Activated T-helper 1 cell treated with anti-CD3 and anti-CD28 coated beads, Interleukin-12 subunit alpha, Interleukin-12 subunit beta, Interleukin-2, Interleukin-4 antibody, amounts not matched to agents 30 ng/mL and 10 ng/mL and 1 ng/mL, durations not matched to agents 14 hours and 24 hours and 36 hours (primary cell): ENCODE measurements at regions of chr1 and their contacts with region 1.

Region 1: GRCh38 chr1:207097871-207098324 is 6.1 kb upstream of the C4BPA start:
- DNase-seq: peak; percentile 50
- H3K4me3 Mint-ChIP-seq: peak overlapping the region; percentile 27
- H3K27ac Mint-ChIP-seq: peak overlapping the region; percentile 69
- H3K4me1 Mint-ChIP-seq: peaks cover 40% of the 10 kb centered on the region
- H3K27me3 Mint-ChIP-seq: no peaks in the 10 kb centered on the region

Region 2: DNA sequence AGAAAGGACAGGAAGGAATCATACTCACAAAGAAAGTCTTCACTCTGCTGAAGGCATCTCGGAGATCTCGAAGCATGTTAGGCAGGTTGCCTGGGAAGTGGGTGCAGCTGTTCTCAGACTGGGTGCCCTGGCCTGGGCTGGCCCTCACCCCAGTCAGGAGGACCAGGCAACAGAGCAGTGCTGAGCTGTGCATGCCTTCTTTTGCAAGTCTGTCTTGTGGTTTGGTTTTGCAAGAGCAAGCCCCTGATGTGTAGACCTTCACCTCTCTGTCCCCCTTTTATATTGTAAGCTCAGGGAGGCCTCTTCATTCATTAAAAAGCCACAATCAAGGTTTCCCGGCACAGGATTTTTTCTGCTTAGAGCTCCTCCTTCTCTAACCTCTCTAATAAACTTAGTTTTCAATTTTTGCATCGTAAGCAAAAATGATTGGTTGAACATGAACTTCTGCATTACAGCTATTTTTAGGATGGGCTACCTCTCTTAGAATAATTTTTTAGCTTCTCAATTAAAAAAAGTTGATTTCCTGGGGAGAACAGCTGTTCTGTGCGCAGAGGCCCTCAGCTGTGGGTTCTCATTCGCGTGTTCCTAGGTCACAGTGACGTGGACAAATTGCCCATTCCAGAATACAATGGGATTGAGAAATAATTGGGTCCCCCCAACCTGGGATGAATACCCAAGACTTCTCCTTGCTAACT is 325.5 kb before region 1 on chr1 and contains the start of gene IL10:
- intact Hi-C with region 1: no loop called
- DNase-seq: no peak
- H3K4me3 Mint-ChIP-seq: no peak within 1 kb of the TSS
- H3K27ac Mint-ChIP-seq: no peak within 1 kb of the TSS
- H3K4me1 Mint-ChIP-seq: peaks cover 58% of the 10 kb centered on the region
- H3K27me3 Mint-ChIP-seq: peaks cover 45% of the 10 kb centered on the region
- total RNA-seq, gene IL10: 4.4 and 5.0 TPM in 2 replicates

Region 3: GRCh38 chr1:207084701-207085180 is 13.2 kb before region 1 on chr1:
- intact Hi-C with region 1: loop called (anchors 1 kb)
- DNase-seq: peak; percentile 50
- H3K4me3 Mint-ChIP-seq: no peak overlapping the region
- H3K27ac Mint-ChIP-seq: peak overlapping the region; percentile 5
- H3K4me1 Mint-ChIP-seq: peaks cover 39% of the 10 kb centered on the region
- H3K27me3 Mint-ChIP-seq: peaks cover 12% of the 10 kb centered on the region

Region 4: GRCh38 chr1:207140536-207140935 is 42.6 kb after region 1 on chr1:
- intact Hi-C with region 1: no loop called
- DNase-seq: no peak
- H3K4me3 Mint-ChIP-seq: no peak overlapping the region
- H3K27ac Mint-ChIP-seq: no peak overlapping the region
- H3K4me1 Mint-ChIP-seq: no peaks in the 10 kb centered on the region
- H3K27me3 Mint-ChIP-seq: no peaks in the 10 kb centered on the region

Region 5: GRCh38 chr1:207186503-207186902 is 88.6 kb after region 1 on chr1:
- intact Hi-C with region 1: no loop called
- DNase-seq: no peak
- H3K4me3 Mint-ChIP-seq: no peak overlapping the region
- H3K27ac Mint-ChIP-seq: no peak overlapping the region
- H3K4me1 Mint-ChIP-seq: no peaks in the 10 kb centered on the region
- H3K27me3 Mint-ChIP-seq: peaks cover 12% of the 10 kb centered on the region

Region 6: DNA sequence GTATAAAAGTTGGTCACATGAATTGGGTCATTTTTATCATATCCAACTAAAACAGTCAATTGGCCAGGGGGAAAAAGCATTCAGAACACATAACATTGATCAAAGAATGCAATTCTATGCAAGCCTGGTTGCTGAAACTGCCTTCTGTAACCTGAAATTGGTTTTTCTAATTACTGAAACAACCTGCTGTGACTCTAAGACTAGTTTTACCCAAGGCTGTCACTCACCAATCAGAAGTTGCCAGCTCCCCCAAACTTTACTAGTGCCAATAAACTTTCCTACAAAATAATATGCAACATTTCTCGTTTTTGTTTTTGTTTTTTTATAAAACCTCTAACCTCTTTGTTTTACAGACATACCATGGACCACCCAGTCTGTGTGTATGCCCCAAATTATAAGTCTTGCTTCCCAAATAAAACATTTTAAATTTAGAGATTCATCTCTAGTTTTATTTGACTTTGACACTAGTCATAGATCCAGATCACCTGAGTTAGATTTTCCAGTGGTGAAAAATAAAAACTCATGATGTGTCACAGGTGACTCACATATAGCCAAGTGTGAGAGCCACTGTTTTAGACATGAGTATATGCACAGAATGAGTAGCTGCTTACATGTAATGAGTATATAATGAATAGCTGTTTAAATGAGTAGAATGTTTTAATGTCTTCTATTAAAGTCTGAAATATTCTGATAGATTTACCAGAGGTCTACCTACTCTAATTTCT is 292.0 kb after region 1 on chr1:
- intact Hi-C with region 1: loop called (anchors 1 kb)
- DNase-seq: no peak
- H3K4me3 Mint-ChIP-seq: no peak overlapping the region
- H3K27ac Mint-ChIP-seq: peak overlapping the region; percentile 81
- H3K4me1 Mint-ChIP-seq: peaks cover 7% of the 10 kb centered on the region
- H3K27me3 Mint-ChIP-seq: no peaks in the 10 kb centered on the region

Region 7: GRCh38 chr1:207414606-207415108 is 316.8 kb after region 1 on chr1:
- intact Hi-C with region 1: loop called (anchors 1 kb)
- DNase-seq: no peak
- H3K4me3 Mint-ChIP-seq: no peak overlapping the region
- H3K27ac Mint-ChIP-seq: peak overlapping the region; percentile 35
- H3K4me1 Mint-ChIP-seq: peaks cover 33% of the 10 kb centered on the region
- H3K27me3 Mint-ChIP-seq: peaks cover 4% of the 10 kb centered on the region